Activated CD8-positive, alpha-beta T cell treated with anti-CD3 and anti-CD28 coated beads for 36 hours (primary cell): ENCODE measurements at regions of chr3 and their contacts with region 1.

Region 1: DNA sequence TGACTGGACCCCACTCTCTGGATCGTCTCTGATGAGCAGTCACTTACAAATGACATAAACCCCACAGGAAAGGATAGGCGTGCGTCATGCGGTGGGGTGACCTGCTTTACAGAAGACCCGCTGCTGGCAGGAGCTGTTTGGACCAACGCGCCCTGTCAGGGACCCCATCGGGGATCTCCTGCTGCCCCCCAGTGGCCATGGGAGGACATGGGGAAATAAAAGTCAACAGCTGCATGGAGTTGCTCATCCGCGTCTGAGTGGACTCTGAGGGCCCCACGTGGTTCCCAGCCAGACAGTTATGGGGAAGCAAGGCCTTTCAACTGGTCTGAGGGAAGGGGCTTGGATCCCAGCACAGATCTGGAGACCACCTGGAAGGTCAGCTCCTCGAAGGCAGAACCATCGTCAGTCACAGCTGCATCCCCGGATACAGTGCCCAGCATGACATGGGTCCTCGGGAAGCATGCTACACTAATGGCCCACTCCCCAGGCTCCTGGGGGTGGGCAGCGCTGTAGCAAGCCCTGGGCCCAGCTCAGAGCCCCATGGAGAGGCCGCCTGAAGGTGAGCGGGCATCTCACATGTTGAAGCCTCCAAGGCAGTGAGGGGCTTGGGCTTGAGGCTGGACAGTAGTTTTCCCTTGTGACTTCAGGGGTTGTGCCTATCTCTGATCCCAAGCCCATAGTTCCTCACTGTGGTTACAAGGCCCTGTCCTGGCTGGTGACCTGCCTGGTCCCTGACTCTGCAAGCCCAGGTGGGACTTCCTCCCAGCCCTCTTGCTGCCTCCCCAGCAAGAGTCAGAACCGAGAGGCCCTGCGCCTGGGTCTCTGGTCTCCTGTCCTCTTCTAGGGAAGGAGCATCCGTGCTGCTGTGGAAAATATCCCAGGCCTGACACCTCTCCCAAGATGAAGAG is 32.3 kb downstream of the PTH1R start:
- DNase-seq: peak; percentile 95
- ATAC-seq: peak; percentile 96
- H3K4me3 Mint-ChIP-seq: no peak overlapping the region
- H3K27ac Mint-ChIP-seq: no peak overlapping the region
- H3K4me1 Mint-ChIP-seq: peaks cover 16% of the 10 kb centered on the region
- H3K27me3 Mint-ChIP-seq: no peaks in the 10 kb centered on the region
- CTCF ChIP-seq: peak; percentile 81

Region 2: GRCh38 chr3:46705022-46705530 is 204.7 kb before region 1 on chr3:
- CTCF ChIA-PET with region 1: interaction called, 11 read pairs
- POLR2A ChIA-PET with region 1: no interaction called
- intact Hi-C with region 1: no loop called
- DNase-seq: peak; percentile 78
- ATAC-seq: peak; percentile 90
- H3K4me3 Mint-ChIP-seq: no peak overlapping the region
- H3K27ac Mint-ChIP-seq: no peak overlapping the region
- H3K4me1 Mint-ChIP-seq: peaks cover 4% of the 10 kb centered on the region
- H3K27me3 Mint-ChIP-seq: peaks cover 7% of the 10 kb centered on the region
- CTCF ChIP-seq: peak; percentile 95

Region 3: DNA sequence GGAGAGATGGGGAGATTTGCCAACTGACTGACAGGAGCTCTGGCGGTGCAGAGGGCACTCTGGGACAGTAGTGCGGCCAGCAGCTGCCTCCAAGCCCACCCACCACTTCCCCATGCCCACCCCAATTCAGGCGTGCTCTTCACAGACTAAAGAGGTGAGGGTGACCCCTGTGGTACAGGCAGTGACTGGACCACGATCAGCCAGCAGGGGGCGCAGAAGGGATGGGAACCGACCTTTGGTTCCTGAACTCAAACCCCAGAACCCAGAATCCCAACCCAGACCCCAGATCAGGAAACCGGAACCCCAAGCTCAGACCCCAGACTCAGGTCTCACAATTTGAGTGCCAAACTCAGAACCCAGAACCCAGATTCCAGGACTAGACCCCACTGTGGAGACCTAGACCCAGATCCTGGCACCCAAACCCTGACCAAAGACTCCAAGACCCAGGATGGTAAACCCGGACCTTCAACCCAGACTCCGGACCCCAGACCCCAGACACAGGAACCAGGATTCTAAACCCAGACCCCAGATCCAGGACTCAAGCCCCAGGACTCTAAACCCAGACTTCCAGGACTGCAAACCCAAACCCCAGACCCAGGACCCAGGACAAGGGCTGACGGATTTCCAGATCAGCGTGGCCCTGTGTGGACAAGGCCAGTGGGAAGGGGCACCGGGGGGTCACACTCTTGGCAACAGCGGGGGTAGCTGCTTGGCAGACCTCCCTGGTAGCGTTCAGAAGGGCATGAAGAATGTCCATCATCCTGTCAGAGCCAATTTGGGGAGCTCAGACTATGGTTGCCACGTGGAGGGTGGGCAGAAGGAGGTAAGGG is 42.9 kb before region 1 on chr3:
- CTCF ChIA-PET with region 1: interaction called, 13 read pairs
- POLR2A ChIA-PET with region 1: no interaction called
- intact Hi-C with region 1: loop called (anchors 2 kb)
- DNase-seq: peak; percentile 87
- ATAC-seq: peak; percentile 81
- H3K4me3 Mint-ChIP-seq: no peak overlapping the region
- H3K27ac Mint-ChIP-seq: no peak overlapping the region
- H3K4me1 Mint-ChIP-seq: no peaks in the 10 kb centered on the region
- H3K27me3 Mint-ChIP-seq: no peaks in the 10 kb centered on the region
- CTCF ChIP-seq: peak; percentile 84

Region 4: GRCh38 chr3:47047673-47048072 is 137.9 kb after region 1 on chr3:
- CTCF ChIA-PET with region 1: no interaction called
- POLR2A ChIA-PET with region 1: no interaction called
- intact Hi-C with region 1: no loop called
- DNase-seq: no peak
- ATAC-seq: peak; percentile 77
- H3K4me3 Mint-ChIP-seq: no peak overlapping the region
- H3K27ac Mint-ChIP-seq: peak overlapping the region; percentile 75
- H3K4me1 Mint-ChIP-seq: peaks cover 19% of the 10 kb centered on the region
- H3K27me3 Mint-ChIP-seq: no peaks in the 10 kb centered on the region
- CTCF ChIP-seq: no peak